PC-3 (cell line): ENCODE measurements at regions of chr1 and their contacts with region 1.

Region 1: DNA sequence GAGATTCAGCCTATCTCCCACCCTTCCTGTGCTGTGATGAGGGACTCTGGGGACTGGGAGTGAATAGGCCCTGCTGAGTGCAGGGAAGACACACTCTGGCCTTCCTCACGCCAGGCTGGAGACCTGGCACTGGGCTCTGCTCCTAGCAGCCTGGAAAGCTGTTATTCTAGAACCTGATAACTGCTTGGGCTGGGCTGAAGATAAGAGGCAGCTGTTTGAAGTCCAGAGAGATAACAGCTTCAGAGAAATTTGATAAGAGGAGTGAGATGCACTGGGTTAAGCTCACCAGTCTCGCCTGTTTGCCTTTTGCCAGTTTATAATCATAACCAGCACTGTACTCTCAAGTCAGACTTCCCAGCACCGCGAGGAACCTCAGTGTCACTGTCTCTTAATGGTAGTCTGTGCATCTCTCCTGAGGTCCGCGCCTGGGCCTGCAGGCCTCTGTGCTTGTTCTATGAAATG is 46.6 kb upstream of the GPR37L1 start:
- DNase-seq: no peak
- ATAC-seq: no peak
- H3K4me3 ChIP-seq: no peak overlapping the region
- H3K27ac ChIP-seq: no peak overlapping the region
- H3K4me1 ChIP-seq: peaks cover 11% of the 10 kb centered on the region
- H3K27me3 ChIP-seq: no peaks in the 10 kb centered on the region
- CTCF ChIP-seq: no peak

Region 2: DNA sequence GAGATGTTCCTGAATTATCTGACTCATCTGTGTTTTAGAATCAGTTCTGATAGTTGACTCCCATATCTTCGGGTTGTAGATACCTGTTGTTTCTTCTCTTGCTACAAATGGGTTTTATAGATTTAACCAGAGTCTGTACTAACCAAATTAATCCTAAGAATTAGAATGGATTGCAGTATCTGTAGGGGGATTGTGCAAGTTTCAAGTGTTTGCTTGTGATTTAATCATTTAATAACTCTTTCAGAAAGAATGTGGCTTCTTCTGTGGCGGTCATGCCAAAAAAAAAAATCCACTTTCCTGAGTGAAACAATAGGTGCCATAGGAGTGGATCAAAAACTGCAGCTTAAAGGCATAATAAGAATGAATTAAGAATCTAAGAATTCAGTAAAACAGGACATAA is 237.7 kb before region 1 on chr1:
- CTCF ChIA-PET with region 1: no interaction called
- POLR2A ChIA-PET with region 1: interaction called, 28 read pairs
- intact Hi-C with region 1: no loop called
- DNase-seq: no peak
- ATAC-seq: no peak
- H3K4me3 ChIP-seq: no peak overlapping the region
- H3K27ac ChIP-seq: no peak overlapping the region
- H3K4me1 ChIP-seq: no peaks in the 10 kb centered on the region
- H3K27me3 ChIP-seq: no peaks in the 10 kb centered on the region
- CTCF ChIP-seq: no peak